ENCODE measurements at regions of chr14 and their contacts with region 1.

Region 1: DNA sequence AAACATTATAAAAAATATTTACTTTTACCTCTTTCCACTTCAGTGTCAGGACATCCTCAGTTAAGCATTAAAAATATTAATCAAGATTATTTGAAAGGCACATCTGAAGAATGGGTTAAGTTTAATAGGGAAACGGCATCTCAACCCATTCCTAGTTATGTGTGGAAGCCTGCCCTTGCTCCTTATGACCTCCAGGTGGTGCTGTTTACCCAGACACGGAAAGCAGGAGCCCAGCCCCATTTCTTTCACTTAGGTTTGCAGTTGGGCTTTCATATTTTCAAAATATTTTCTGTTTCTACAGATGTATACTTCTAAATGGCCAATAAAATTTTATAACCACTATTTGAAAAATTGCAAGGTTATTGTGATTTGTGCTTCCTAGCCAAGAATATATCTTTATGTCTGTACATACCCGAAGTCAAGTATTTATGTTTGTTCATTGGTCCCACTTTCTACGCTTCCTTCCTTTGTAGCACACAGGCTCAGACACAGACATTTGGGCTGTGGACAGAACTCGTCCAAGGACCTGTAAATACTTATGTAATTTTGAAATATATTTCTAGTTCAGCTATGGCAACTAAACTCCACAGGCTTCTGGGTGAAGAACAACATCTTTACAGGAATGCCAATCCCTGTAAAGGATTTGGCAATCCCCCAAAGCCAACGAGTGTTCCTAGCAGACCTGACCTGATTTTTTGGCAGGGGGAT is 247.1 kb downstream of the AKAP6 start:
- DNase-seq: peak in 1 of 3 donors; percentile 70
- ATAC-seq: peak; percentile 84
- H3K4me3 ChIP-seq: no peak overlapping the region
- H3K4me1 ChIP-seq: no peaks in the 10 kb centered on the region
- CTCF ChIP-seq: peak; percentile 94

Region 2: GRCh38 chr14:32382704-32383103 is 193.5 kb before region 1 on chr14:
- intact Hi-C with region 1: no loop called
- DNase-seq: peak in 2 of 3 donors; percentile 24 to 30
- ATAC-seq: peak; percentile 66
- H3K4me3 ChIP-seq: no peak overlapping the region
- H3K4me1 ChIP-seq: no peaks in the 10 kb centered on the region
- CTCF ChIP-seq: no peak

Region 3: DNA sequence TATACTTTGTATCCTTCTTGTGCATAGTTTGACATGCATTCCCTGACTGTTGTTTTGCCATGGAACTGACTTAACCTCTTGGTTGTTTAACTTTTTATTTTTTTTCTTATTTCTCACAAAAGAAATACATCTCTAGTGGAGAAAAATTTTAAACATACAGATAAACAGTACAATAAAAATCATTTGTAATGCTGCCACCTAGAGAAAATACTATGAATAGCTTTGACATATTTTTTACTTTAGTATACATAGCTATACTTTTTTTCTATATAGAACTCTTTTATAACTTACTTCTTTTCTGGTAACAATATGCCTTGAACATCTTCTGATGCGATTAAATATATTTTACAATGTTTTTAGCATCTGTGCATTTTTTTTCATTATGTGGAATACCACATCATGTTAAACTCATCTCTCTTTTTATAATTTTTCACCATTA is 62.7 kb before region 1 on chr14:
- intact Hi-C with region 1: no loop called
- DNase-seq: no peak
- ATAC-seq: no peak
- H3K4me3 ChIP-seq: no peak overlapping the region
- H3K4me1 ChIP-seq: no peaks in the 10 kb centered on the region
- CTCF ChIP-seq: no peak

Region 4: GRCh38 chr14:33432407-33433023 is 856.3 kb after region 1 on chr14:
- intact Hi-C with region 1: loop called in 1 of 2 experiments (anchors 10 kb)
- DNase-seq: peak in 1 of 3 donors; percentile 79
- ATAC-seq: no peak
- H3K4me3 ChIP-seq: no peak overlapping the region
- H3K4me1 ChIP-seq: no peaks in the 10 kb centered on the region
- CTCF ChIP-seq: no peak